ENCODE measurements at regions of chr3 and their contacts with region 1.

Region 1: DNA sequence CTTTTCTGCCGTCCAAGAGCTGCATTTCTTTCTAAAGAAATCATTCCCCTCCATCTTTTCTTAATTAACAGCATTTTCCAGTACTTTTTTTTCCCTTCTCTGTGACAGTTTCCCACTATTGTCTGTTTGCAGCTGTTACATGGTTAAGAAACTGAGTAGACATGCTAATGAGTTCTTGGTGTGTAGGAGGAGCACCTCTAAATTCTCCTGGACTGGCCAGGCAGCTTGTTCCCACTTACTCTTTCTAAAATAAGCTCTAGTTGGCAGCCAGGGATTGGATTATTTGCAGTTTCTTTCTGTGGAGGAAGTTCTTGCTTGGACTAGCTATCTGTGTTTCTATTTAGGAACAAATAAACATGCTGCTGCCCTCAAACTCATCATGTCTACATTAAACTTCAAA is 235.1 kb upstream of the GAP43 start:
- DNase-seq: no peak
- CTCF ChIP-seq: no peak

Region 2: GRCh38 chr3:115375362-115375761 is 12.8 kb before region 1 on chr3:
- CTCF ChIA-PET with region 1: interaction called, 11 read pairs
- POLR2A ChIA-PET with region 1: no interaction called
- DNase-seq: no peak
- CTCF ChIP-seq: no peak

Region 3: GRCh38 chr3:115409596-115409995 is 21.4 kb after region 1 on chr3:
- CTCF ChIA-PET with region 1: no interaction called
- POLR2A ChIA-PET with region 1: no interaction called
- DNase-seq: no peak
- CTCF ChIP-seq: no peak

Region 4: GRCh38 chr3:115595611-115596275 is 207.6 kb after region 1 on chr3:
- CTCF ChIA-PET with region 1: no interaction called
- POLR2A ChIA-PET with region 1: no interaction called
- DNase-seq: no peak
- CTCF ChIP-seq: no peak

Measured in GM10248 (cell line).